ENCODE measurements at regions of chr19 and their contacts with region 1.

Region 1: GRCh38 chr19:2070436-2070827 is 19.4 kb upstream of the MKNK2 start:
- DNase-seq: no peak
- H3K4me3 ChIP-seq: no peak overlapping the region
- H3K27ac ChIP-seq: no peak overlapping the region
- H3K4me1 ChIP-seq: no peaks in the 10 kb centered on the region
- H3K27me3 ChIP-seq: no peaks in the 10 kb centered on the region
- CTCF ChIP-seq: no peak

Region 2: DNA sequence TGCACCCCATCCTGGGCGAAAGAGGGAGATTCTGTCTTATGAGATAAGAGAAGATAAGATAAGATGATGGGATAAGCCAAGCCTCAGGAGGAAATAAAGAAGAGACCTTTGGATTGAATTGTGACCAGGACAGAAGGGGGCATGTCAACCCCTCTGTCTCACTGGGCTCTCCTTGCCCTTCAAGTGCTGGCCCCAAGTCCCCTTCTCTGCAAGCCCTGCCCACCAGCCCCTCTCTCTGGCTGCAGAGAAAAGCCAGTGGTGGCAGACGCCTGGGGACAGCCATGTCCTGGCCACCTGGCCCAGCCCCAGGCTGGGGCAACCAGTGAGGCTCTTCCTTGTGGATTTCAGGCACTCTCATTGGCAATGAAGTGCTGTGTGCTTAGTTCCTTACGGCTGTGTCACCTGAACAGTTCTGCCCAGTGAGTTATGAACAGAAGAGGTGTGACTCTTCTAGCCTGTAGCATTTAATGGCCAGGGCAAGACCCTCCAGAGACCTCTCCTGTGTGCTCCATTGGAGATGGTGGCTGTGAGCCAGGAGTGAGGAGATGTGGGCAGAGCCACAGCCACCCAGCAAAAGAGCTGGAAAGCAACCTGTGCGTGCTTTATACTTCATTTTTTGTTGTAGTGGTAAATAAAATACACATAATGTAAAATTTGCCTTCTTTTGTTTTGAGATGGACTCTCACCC is 48.8 kb before region 1 on chr19:
- intact Hi-C with region 1: loop called (anchors 5 kb)
- DNase-seq: no peak
- H3K4me3 ChIP-seq: no peak overlapping the region
- H3K27ac ChIP-seq: no peak overlapping the region
- H3K4me1 ChIP-seq: no peaks in the 10 kb centered on the region
- H3K27me3 ChIP-seq: no peaks in the 10 kb centered on the region
- CTCF ChIP-seq: no peak

Measured in kidney (tissue), 22 donors.